PC-3 (cell line): ENCODE measurements at regions of chr6 and their contacts with region 1.

Region 1: GRCh38 chr6:88870717-88871330 is 92.6 kb downstream of the RNGTT start:
- DNase-seq: peak; percentile 73
- ATAC-seq: no peak
- H3K4me3 ChIP-seq: no peak overlapping the region
- H3K27ac ChIP-seq: no peak overlapping the region
- H3K4me1 ChIP-seq: peaks cover 29% of the 10 kb centered on the region
- H3K27me3 ChIP-seq: no peaks in the 10 kb centered on the region
- CTCF ChIP-seq: peak; percentile 70

Region 2: GRCh38 chr6:87589693-87590549 is 1280.9 kb before region 1 on chr6 and contains the starts of genes ORC3 and RARS2:
- CTCF ChIA-PET with region 1: no interaction called
- POLR2A ChIA-PET with region 1: no interaction called
- intact Hi-C with region 1: loop called (anchors 5 kb)
- DNase-seq: peak; percentile 92
- ATAC-seq: peak; percentile 99
- H3K4me3 ChIP-seq: peak within 1 kb of the TSS; percentile 96
- H3K27ac ChIP-seq: peak within 1 kb of the TSS; percentile 34
- H3K4me1 ChIP-seq: peaks cover 21% of the 10 kb centered on the region
- H3K27me3 ChIP-seq: no peaks in the 10 kb centered on the region
- CTCF ChIP-seq: no peak
- total RNA-seq, gene ORC3: 17.0 and 25.7 TPM in 2 replicates
- total RNA-seq, gene RARS2: 12.7 and 14.8 TPM in 2 replicates

Region 3: GRCh38 chr6:87832025-87832825 is 1038.6 kb before region 1 on chr6:
- CTCF ChIA-PET with region 1: no interaction called
- POLR2A ChIA-PET with region 1: no interaction called
- intact Hi-C with region 1: loop called (anchors 10 kb)
- DNase-seq: peak; percentile 49
- ATAC-seq: peak; percentile 64
- H3K4me3 ChIP-seq: peak overlapping the region; percentile 70
- H3K27ac ChIP-seq: no peak overlapping the region
- H3K4me1 ChIP-seq: no peaks in the 10 kb centered on the region
- H3K27me3 ChIP-seq: no peaks in the 10 kb centered on the region
- CTCF ChIP-seq: peak; percentile 69

Region 4: GRCh38 chr6:87929843-87930288 is 941.0 kb before region 1 on chr6:
- CTCF ChIA-PET with region 1: no interaction called
- POLR2A ChIA-PET with region 1: no interaction called
- intact Hi-C with region 1: loop called (anchors 1 kb)
- DNase-seq: peak; percentile 75
- ATAC-seq: peak; percentile 99
- H3K4me3 ChIP-seq: no peak overlapping the region
- H3K27ac ChIP-seq: no peak overlapping the region
- H3K4me1 ChIP-seq: no peaks in the 10 kb centered on the region
- H3K27me3 ChIP-seq: 0 out of 2 replicates have a peak, but pooled peaks cover 3% of the 10 kb centered on the region
- CTCF ChIP-seq: peak; percentile 79

Region 5: GRCh38 chr6:88492824-88493223 is 378.0 kb before region 1 on chr6:
- CTCF ChIA-PET with region 1: no interaction called
- POLR2A ChIA-PET with region 1: no interaction called
- intact Hi-C with region 1: loop called (anchors 5 kb)
- DNase-seq: peak; percentile 31
- ATAC-seq: peak; percentile 55
- H3K4me3 ChIP-seq: no peak overlapping the region
- H3K27ac ChIP-seq: no peak overlapping the region
- H3K4me1 ChIP-seq: no peaks in the 10 kb centered on the region
- H3K27me3 ChIP-seq: no peaks in the 10 kb centered on the region
- CTCF ChIP-seq: peak; percentile 69

Region 6: DNA sequence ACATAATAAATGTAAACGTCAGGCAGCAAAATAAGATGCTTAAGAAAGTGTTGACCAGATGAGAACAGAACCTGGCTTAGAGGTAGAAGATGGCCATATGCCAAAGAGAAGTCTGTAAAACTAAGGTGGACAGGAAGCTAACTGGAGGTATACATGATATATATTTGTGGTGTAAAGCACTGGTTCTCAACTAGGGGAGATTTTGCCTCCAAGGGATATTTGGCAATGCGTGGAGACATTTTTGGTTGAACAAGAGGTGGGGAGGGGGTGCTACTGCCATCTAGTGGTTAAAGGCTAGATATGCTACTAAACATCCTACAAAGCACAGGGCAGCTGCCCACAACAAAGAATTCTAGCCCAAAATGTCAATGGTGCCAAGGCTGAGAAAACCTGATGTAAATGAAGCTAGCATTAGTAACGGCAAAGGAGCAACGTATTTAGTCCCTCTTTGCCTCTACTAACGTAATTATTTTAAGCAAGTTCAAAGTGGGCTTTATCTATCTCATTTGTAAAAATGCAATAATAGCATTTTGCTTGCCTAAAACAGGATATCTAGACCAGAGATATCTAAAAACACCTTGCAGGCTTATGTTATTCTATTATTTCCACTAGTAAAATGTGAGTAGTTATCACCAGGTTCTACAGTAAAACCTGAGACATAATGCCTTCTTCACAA is 90.0 kb before region 1 on chr6:
- CTCF ChIA-PET with region 1: no interaction called
- POLR2A ChIA-PET with region 1: no interaction called
- intact Hi-C with region 1: loop called (anchors 1 kb)
- DNase-seq: peak; percentile 64
- ATAC-seq: peak; percentile 71
- H3K4me3 ChIP-seq: no peak overlapping the region
- H3K27ac ChIP-seq: no peak overlapping the region
- H3K4me1 ChIP-seq: no peaks in the 10 kb centered on the region
- H3K27me3 ChIP-seq: no peaks in the 10 kb centered on the region
- CTCF ChIP-seq: peak; percentile 81

Region 7: DNA sequence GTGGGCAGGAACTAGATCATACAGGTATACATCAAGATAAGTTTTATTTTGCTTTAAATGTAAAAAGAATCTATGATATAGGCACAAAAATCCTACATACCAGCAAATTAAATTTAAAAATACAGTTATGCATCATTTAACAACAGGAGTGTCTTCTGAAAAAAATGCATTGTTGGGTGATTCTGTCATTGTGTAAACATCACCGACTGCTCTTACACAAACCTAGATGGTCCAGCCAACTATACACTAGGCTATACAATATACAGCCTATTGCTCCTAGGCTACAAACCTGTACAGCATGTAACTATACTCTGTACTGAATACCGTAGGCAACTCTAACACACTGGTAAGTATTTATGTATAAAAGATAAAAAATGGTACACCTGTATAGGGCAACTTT is 46.8 kb before region 1 on chr6:
- CTCF ChIA-PET with region 1: no interaction called
- POLR2A ChIA-PET with region 1: no interaction called
- intact Hi-C with region 1: loop called (anchors 2 kb)
- DNase-seq: peak; percentile 76
- ATAC-seq: peak; percentile 100
- H3K4me3 ChIP-seq: no peak overlapping the region
- H3K27ac ChIP-seq: peak overlapping the region; percentile 40; the same call in 1 of the 2 replicates
- H3K4me1 ChIP-seq: peaks cover 13% of the 10 kb centered on the region
- H3K27me3 ChIP-seq: no peaks in the 10 kb centered on the region
- CTCF ChIP-seq: no peak